Activated CD4-positive, alpha-beta memory T cell treated with anti-CD3 and anti-CD28 coated beads for 36 hours (primary cell): ENCODE measurements at regions of chr1 and their contacts with region 1.

Region 1: DNA sequence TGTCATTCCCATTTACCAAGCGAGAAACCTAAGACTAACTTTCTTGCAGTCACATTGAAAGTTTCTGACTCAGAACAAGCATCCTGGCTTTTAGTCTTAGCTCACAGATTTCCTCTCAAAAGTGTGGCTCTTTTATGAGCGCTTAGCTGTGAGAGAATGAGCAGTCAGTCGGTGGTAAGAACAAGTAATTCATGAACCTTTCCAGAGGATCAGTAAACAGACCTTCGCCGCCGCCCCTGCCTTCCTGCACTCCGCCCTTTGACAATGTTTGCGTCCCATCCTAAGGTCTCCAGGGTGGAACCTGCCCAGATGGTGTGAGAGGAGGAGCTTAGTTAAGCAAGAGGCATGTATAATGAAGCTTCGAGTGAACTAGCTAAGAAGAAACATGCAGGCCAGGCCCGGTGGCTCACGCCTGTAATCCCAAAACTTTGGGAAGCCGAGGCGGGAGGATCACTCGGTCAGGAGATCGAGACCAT is 142.4 kb downstream of the GLUL start:
- DNase-seq: peak; percentile 84
- H3K4me3 Mint-ChIP-seq: no peak overlapping the region
- H3K27ac Mint-ChIP-seq: peak overlapping the region; percentile 80
- H3K4me1 Mint-ChIP-seq: peaks cover 22% of the 10 kb centered on the region
- H3K27me3 Mint-ChIP-seq: peaks cover 3% of the 10 kb centered on the region

Region 2: DNA sequence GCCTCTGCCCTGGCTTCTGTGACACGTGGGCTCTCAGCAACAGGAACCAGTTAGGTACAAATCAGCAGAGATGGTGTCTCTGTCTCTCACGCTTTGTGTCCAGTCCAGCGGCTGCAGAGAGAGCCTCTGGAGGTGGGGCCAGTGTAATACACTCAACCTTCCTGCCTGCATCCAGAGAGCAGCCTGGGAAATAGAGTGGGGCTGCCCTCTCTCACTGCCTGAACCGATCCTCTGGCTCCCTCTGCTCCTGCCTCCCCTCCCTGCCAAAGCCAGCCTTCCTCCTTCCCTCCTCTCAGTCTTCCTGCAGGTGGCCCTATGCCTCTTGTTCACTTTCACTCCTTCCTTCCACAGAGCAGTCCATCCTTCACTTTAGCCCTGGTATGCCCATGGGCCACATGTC is 187.6 kb before region 1 on chr1 and contains the start of gene ZNF648:
- CTCF ChIA-PET with region 1: no interaction called
- POLR2A ChIA-PET with region 1: no interaction called
- intact Hi-C with region 1: no loop called
- DNase-seq: no peak
- H3K4me3 Mint-ChIP-seq: no peak within 1 kb of the TSS
- H3K27ac Mint-ChIP-seq: no peak within 1 kb of the TSS
- H3K4me1 Mint-ChIP-seq: peaks cover under 1% of the 10 kb centered on the region
- H3K27me3 Mint-ChIP-seq: peaks cover 40% of the 10 kb centered on the region
- total RNA-seq, gene ZNF648: not detected

Region 3: DNA sequence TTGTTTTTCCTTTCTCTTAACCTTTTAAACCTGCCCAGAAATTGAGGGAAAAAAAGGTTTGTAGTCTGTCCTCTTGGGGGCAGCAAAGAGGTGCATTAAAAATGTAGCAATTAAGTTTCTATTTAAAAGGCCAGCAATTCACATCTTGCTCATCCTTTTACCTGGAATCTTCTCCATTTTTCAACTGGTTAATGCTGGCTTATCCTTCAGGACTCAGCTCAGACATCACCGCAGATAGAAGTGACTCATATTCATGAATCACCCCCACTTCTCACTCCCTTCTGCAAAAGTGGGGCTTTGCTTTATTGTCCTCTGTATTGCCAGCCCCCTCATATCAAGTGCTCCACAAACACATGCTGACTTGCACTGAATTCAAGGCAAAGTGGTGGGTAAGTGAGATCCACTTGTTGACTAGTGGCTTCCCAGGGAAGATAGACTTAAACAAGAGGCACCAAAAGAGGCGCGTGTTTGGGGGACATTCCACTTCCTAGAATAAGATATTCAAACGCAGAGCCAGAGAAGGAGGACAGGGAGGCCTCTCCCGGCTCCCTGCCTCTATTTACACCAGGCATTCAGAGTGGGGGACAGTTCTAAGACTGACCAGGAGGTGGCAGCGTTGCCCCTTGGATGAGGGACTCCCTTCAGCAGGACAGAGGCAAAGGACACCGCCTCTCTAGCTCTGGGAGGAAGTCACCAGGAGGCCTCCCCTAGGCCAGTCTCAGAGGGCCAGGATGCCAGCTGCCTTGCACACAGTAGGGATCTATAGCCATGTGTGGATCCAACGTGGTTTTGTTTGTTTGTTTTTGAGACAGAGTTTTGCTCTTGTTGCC is 164.5 kb before region 1 on chr1:
- CTCF ChIA-PET with region 1: interaction called, 3 read pairs
- POLR2A ChIA-PET with region 1: no interaction called
- intact Hi-C with region 1: loop called (anchors 2 kb)
- DNase-seq: peak; percentile 91
- H3K4me3 Mint-ChIP-seq: no peak overlapping the region
- H3K27ac Mint-ChIP-seq: peak overlapping the region; percentile 10
- H3K4me1 Mint-ChIP-seq: peaks cover 42% of the 10 kb centered on the region
- H3K27me3 Mint-ChIP-seq: no peaks in the 10 kb centered on the region

Region 4: GRCh38 chr1:182185813-182186756 is 63.2 kb before region 1 on chr1:
- CTCF ChIA-PET with region 1: no interaction called
- POLR2A ChIA-PET with region 1: no interaction called
- intact Hi-C with region 1: loop called (anchors 5 kb)
- DNase-seq: no peak
- H3K4me3 Mint-ChIP-seq: no peak overlapping the region
- H3K27ac Mint-ChIP-seq: no peak overlapping the region
- H3K4me1 Mint-ChIP-seq: peaks cover 4% of the 10 kb centered on the region
- H3K27me3 Mint-ChIP-seq: peaks cover 11% of the 10 kb centered on the region

Region 5: DNA sequence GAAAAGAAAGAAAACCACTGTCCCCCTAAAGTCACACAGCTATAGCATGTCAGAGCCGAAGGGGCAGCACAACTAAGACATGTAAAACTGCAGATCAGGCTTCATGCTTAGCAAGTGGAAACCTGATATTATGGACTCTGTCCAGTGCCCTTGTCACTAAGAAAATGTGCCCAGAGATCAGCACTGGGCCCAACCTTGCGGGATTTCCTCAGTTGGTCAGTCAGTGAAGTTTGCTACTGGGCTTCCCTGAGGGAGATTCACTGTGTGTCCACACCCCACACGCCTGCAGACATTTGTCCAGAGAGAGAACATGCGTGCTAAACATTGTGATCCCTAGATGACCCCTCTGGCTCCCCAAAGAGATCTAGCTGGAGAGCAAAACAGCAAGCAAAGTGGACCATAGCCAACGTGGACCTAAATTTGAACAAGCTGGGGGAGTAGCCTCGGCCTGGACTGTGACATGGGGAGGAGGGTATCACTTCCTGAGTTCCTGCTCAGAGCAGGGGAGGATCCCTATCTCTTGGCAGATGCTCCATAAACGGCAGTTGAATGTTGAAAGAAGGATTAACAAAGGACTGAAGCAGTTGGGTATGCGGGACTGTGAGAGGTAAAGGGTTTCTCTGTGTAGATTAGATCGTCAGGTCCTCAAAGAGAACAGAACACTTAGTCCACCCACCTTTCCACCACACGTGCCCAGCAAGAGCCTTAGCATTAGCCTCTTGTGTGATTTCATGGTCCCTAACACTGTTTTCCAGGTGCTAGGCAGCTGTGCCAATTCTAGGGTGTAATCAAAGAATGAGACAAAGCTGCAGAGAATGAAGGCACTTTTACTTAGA is 88.7 kb after region 1 on chr1:
- CTCF ChIA-PET with region 1: no interaction called
- POLR2A ChIA-PET with region 1: no interaction called
- intact Hi-C with region 1: no loop called
- DNase-seq: no peak
- H3K4me3 Mint-ChIP-seq: no peak overlapping the region
- H3K27ac Mint-ChIP-seq: no peak overlapping the region
- H3K4me1 Mint-ChIP-seq: no peaks in the 10 kb centered on the region
- H3K27me3 Mint-ChIP-seq: no peaks in the 10 kb centered on the region

Region 6: DNA sequence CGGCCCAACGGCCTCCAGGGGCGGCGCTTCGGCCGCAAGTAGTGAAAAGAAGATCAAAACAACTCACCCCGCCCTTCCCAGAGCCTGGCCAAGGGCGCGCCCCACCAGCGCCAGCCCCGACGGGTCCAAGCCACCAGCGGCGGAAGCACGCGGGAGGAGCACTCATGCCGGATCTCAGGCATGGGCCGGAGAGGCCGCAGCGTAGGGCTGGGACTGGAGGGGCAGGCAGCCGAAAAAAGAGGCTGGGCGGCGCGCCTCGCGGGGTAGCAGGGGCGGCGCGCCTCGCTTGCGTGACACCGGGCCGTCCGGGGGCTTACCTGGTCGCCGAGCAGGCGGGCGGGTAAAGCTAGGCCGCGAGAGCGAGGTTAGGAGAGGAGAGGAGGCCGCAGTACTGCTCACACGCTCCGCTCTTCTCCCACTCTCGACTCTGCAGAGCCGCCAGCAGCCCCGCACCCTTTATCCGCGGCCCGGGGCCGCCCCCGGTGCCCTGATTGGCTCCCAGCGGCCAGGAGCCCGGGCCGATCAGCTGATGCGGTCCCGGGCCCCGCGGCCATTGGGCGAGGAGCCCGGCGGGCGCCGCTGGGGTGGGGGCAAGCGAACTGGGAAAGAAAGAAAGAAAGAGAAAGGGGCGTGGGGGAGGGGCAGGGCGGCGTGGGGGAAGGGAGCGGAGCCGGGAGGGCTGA is 142.3 kb after region 1 on chr1 and contains the start of gene GLUL:
- CTCF ChIA-PET with region 1: interaction called, 6 read pairs
- POLR2A ChIA-PET with region 1: no interaction called
- intact Hi-C with region 1: loop called (anchors 1 kb)
- DNase-seq: peak; percentile 82
- H3K4me3 Mint-ChIP-seq: peak within 1 kb of the TSS; percentile 93
- H3K27ac Mint-ChIP-seq: peak within 1 kb of the TSS; percentile 80
- H3K4me1 Mint-ChIP-seq: peaks cover 22% of the 10 kb centered on the region
- H3K27me3 Mint-ChIP-seq: peaks cover 7% of the 10 kb centered on the region
- total RNA-seq, gene GLUL: 61.3 to 63.9 TPM

Region 7: GRCh38 chr1:182629499-182630096 is 380.4 kb after region 1 on chr1:
- CTCF ChIA-PET with region 1: no interaction called
- POLR2A ChIA-PET with region 1: no interaction called
- intact Hi-C with region 1: loop called (anchors 2 kb)
- DNase-seq: peak; percentile 87
- H3K4me3 Mint-ChIP-seq: no peak overlapping the region
- H3K27ac Mint-ChIP-seq: peak overlapping the region; percentile 50
- H3K4me1 Mint-ChIP-seq: peaks cover 64% of the 10 kb centered on the region
- H3K27me3 Mint-ChIP-seq: peaks cover 9% of the 10 kb centered on the region